ENCODE measurements at regions of chr9 and their contacts with region 1.

Region 1: DNA sequence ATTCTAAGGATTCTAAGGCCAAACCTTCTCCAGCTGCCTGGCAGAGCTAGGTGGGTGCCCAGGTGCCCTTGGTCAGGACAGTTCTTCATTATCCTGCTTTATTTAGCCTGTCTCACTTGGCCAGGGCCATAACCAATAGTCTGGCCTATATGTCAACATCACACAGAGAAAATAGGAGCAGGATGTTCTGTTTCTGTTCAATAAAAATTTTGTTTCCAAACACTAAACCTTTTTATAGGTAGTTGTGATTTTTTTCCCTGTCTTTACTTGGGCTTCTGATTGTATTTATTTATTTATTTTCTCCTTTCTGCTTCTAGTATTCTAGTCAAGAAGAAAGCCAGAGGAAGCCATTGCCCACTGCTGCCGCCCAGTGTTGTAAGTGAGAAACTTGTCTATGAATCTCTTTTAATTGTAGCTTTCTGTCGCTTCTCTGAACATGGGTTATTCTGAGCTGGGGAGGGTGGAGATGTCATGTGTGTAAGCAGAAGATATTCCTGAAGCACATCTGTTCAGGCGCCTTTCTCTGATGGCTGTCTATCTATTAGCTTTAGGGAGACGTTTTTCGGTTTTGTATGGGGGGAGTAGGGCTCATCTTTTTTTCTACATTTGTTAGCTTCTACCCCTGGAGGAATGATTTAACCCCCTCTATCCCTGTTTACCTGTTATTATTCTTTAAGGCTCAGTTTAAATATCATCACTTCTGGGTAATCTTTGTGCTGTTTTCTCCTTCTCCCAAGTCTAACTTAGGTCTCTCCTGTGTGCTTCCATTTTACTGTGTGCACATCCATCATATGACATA is 97.1 kb downstream of the UNC13B start:
- DNase-seq: peak; percentile 60 to 73
- ATAC-seq: peak; percentile 47 to 78 (median 66)
- H3K4me3 ChIP-seq: no peak overlapping the region
- H3K27ac ChIP-seq: no peak overlapping the region
- H3K4me1 ChIP-seq: peaks cover 0 to 10% (median 5%) of the 10 kb centered on the region in 9 donors
- H3K27me3 ChIP-seq: no peaks in the 10 kb centered on the region
- CTCF ChIP-seq: peak; percentile 44 to 85 (median 72)

Region 2: GRCh38 chr9:34522971-34523797 is 735.7 kb before region 1 on chr9 and contains the start of gene ENHO:
- intact Hi-C with region 1: no loop called
- DNase-seq: peak; percentile 84 to 91
- ATAC-seq: peak; percentile 97 to 99 (median 98)
- H3K4me3 ChIP-seq: peak within 1 kb of the TSS in 9 of 10 donors; percentile 43 to 55 (median 48)
- H3K27ac ChIP-seq: no peak within 1 kb of the TSS
- H3K4me1 ChIP-seq: peaks cover 0 to 10% (median 8%) of the 10 kb centered on the region in 9 donors
- H3K27me3 ChIP-seq: peaks cover 0 to 25% (median 0%) of the 10 kb centered on the region in 7 donors
- CTCF ChIP-seq: peak in 1 of 9 donors; percentile 11
- total RNA-seq, gene ENHO: 0.32 to 0.64 (median 0.42) TPM in 6 of 10 donors, not detected in the others

Region 3: GRCh38 chr9:34896112-34896511 is 362.8 kb before region 1 on chr9:
- intact Hi-C with region 1: no loop called
- DNase-seq: no peak
- ATAC-seq: no peak
- H3K4me3 ChIP-seq: no peak overlapping the region
- H3K27ac ChIP-seq: no peak overlapping the region
- H3K4me1 ChIP-seq: no peaks in the 10 kb centered on the region
- H3K27me3 ChIP-seq: peaks cover 0 to 41% (median 30%) of the 10 kb centered on the region in 7 donors
- CTCF ChIP-seq: peak in 5 of 9 donors; percentile 8 to 37 (median 20)

Region 4: DNA sequence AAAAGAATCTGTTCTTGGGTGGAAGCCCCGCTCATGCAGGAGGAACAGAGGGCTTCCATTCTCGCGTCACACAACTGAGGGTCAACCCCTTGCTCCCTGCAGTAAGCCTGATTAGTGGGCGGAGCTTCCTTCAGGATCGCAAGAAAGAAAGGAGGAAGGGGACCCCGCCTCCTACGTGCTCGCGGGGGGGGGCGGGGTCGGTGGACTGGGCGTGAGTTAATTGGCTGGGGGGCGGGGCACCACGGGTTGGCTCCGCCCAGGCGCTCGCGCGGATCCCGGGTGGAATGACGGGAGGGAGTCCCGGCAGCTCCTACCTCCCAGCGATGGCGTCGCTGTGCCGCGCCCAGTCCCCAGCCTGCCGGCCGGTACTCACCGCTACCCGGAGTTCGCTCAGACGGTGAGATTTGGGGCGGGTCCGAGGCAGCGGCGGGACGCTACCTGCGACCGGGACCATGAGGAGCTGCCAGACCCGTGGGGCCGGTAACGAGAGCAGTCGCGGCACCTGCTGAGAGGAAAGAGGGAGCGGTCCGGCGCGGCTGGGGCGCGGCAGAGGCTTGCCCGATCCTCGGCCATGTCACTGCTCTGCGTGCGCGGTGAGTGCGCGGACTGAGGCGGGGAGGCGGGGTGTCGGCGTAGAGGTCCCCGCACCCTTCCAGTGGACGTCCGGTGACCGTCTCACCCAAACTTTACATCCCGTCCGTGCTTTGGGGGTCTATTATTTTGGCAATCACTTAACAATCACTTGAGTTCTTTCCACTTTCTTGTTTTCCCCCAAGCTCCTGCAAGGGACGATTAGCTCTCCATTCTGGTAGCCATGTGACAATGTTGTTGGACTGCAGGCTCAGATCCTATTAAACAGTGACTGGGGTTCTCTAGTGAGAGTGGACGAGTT is 96.9 kb before region 1 on chr9 and contains the start of gene UNC13B:
- intact Hi-C with region 1: loop called in 2 of 10 experiments (anchors 5 to 10 kb)
- DNase-seq: peak; percentile 96 to 97
- ATAC-seq: peak; percentile 98 to 100 (median 99)
- H3K4me3 ChIP-seq: peak within 1 kb of the TSS; percentile 61 to 93 (median 78)
- H3K27ac ChIP-seq: peak within 1 kb of the TSS; percentile 88 to 98 (median 94)
- H3K4me1 ChIP-seq: peaks cover 0 to 36% (median 21%) of the 10 kb centered on the region in 9 donors
- H3K27me3 ChIP-seq: peaks cover 0 to 6% (median 0%) of the 10 kb centered on the region in 7 donors
- CTCF ChIP-seq: peak in 5 of 9 donors; percentile 20 to 53 (median 39)
- total RNA-seq, gene UNC13B: 13.7 to 27.1 (median 19.9) TPM

Region 5: GRCh38 chr9:35193762-35194161 is 65.1 kb before region 1 on chr9:
- intact Hi-C with region 1: loop called in 1 of 10 experiments (anchors 10 kb)
- DNase-seq: no peak
- ATAC-seq: peak in 1 of 8 donors; percentile 47
- H3K4me3 ChIP-seq: no peak overlapping the region
- H3K27ac ChIP-seq: no peak overlapping the region
- H3K4me1 ChIP-seq: peaks cover 0 to 6% (median 0%) of the 10 kb centered on the region in 9 donors
- H3K27me3 ChIP-seq: no peaks in the 10 kb centered on the region
- CTCF ChIP-seq: peak in 3 of 9 donors; percentile 11 to 23 (median 12)

Region 6: GRCh38 chr9:35395076-35395705 is 136.3 kb after region 1 on chr9:
- intact Hi-C with region 1: no loop called
- DNase-seq: no peak
- ATAC-seq: peak in 2 of 8 donors; percentile 29 to 72
- H3K4me3 ChIP-seq: no peak overlapping the region
- H3K27ac ChIP-seq: no peak overlapping the region
- H3K4me1 ChIP-seq: peaks cover 0 to 3% (median 0%) of the 10 kb centered on the region in 9 donors
- H3K27me3 ChIP-seq: no peaks in the 10 kb centered on the region
- CTCF ChIP-seq: no peak

Region 7: GRCh38 chr9:35406183-35406956 is 147.5 kb after region 1 on chr9:
- intact Hi-C with region 1: no loop called
- DNase-seq: peak in 1 of 2 donors; percentile 41
- ATAC-seq: peak in 7 of 8 donors; percentile 19 to 63 (median 53)
- H3K4me3 ChIP-seq: no peak overlapping the region
- H3K27ac ChIP-seq: no peak overlapping the region
- H3K4me1 ChIP-seq: peaks cover 0 to 4% (median 0%) of the 10 kb centered on the region in 9 donors
- H3K27me3 ChIP-seq: no peaks in the 10 kb centered on the region
- CTCF ChIP-seq: no peak

Region 8: GRCh38 chr9:35464141-35465025 is 205.5 kb after region 1 on chr9:
- intact Hi-C with region 1: loop called in 1 of 10 experiments (anchors 10 kb)
- DNase-seq: no peak
- ATAC-seq: no peak
- H3K4me3 ChIP-seq: no peak overlapping the region
- H3K27ac ChIP-seq: no peak overlapping the region
- H3K4me1 ChIP-seq: peaks cover 0 to 6% (median 0%) of the 10 kb centered on the region in 9 donors
- H3K27me3 ChIP-seq: no peaks in the 10 kb centered on the region
- CTCF ChIP-seq: no peak

Region 9: GRCh38 chr9:35470894-35471293 is 212.0 kb after region 1 on chr9:
- intact Hi-C with region 1: loop called in 5 of 10 experiments (anchors 2 to 10 kb)
- DNase-seq: no peak
- ATAC-seq: no peak
- H3K4me3 ChIP-seq: no peak overlapping the region
- H3K27ac ChIP-seq: no peak overlapping the region
- H3K4me1 ChIP-seq: no peaks in the 10 kb centered on the region
- H3K27me3 ChIP-seq: no peaks in the 10 kb centered on the region
- CTCF ChIP-seq: no peak

Region 10: DNA sequence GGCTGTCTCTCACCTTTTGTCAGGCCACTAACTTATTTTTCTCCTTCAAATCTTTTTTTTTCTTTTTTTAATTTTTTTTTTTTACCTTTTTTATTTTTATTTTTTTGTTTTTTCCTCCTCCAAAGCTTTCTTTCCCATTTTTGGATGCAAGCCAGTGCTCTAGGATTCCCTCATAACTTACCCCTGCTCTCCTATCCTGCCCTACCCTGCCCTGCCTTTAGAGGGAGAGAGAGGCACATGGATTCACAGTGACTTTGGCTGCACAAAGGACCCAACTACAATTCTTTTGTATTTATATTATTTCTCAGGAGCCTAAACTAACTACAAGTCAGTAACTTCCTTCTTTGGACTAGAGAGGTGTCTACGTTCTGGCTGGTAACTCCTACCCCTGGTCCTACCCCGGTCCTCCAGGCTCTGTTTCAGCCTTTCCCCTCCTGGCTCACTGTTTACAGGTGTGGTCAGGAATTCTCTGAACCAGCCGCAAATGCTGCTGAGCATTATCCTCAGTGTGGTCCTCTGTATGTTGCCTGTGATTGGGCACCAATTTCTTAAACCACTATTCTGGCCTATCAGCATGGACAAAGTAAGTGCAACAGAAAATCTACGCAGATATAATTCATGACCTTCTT is 222.6 kb after region 1 on chr9:
- intact Hi-C with region 1: loop called in 4 of 10 experiments (anchors 2 to 10 kb)
- DNase-seq: peak in 1 of 2 donors; percentile 51
- ATAC-seq: peak in 4 of 8 donors; percentile 57 to 65 (median 60)
- H3K4me3 ChIP-seq: no peak overlapping the region
- H3K27ac ChIP-seq: no peak overlapping the region
- H3K4me1 ChIP-seq: peaks cover 0 to 6% (median 0%) of the 10 kb centered on the region in 9 donors
- H3K27me3 ChIP-seq: no peaks in the 10 kb centered on the region
- CTCF ChIP-seq: peak; percentile 26 to 72 (median 67)

Measured in heart right ventricle (tissue), 16 donors.